B cell (primary cell): ENCODE measurements at regions of chr1 and their contacts with region 1.

Region 1: DNA sequence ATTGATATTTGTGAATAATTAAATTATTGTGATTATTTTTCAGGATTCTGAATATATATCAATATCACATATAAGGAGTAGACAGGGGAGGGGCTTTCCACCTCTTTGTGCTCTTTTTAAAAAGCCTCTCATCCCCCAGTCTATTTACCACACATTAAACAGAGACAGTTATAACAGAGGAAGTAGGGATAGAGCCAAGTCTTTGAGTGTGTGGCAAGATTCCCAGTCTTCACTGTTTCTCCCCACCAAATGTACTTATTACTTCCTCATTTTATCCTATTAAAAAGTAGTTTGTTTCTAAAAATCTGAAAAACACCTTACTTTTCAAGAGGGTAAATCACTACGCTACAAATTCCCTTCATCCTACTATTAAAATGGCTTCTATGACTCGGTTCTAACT is 46.7 kb downstream of the EPS15 start:
- DNase-seq: no peak
- ATAC-seq: no peak
- H3K4me3 ChIP-seq: no peak overlapping the region
- H3K4me3 Mint-ChIP-seq: no peak overlapping the region
- H3K27ac ChIP-seq: peak overlapping the region in 1 of 2 donors; percentile 58
- H3K27ac Mint-ChIP-seq: no peak overlapping the region
- H3K4me1 ChIP-seq: no peaks in the 10 kb centered on the region
- H3K4me1 Mint-ChIP-seq: peaks cover 16% of the 10 kb centered on the region
- H3K27me3 ChIP-seq: no peaks in the 10 kb centered on the region
- H3K27me3 Mint-ChIP-seq: no peaks in the 10 kb centered on the region
- CTCF ChIP-seq: no peak

Region 2: GRCh38 chr1:51433269-51433971 is 38.9 kb before region 1 on chr1:
- CTCF ChIA-PET with region 1: no interaction called
- POLR2A ChIA-PET with region 1: no interaction called
- intact Hi-C with region 1: loop called (anchors 5 kb)
- DNase-seq: no peak
- ATAC-seq: no peak
- H3K4me3 ChIP-seq: no peak overlapping the region
- H3K4me3 Mint-ChIP-seq: no peak overlapping the region
- H3K27ac ChIP-seq: peak overlapping the region in 1 of 2 donors; percentile 39
- H3K27ac Mint-ChIP-seq: peak overlapping the region; percentile 56
- H3K4me1 ChIP-seq: peaks cover 19 to 22% of the 10 kb centered on the region in 2 donors
- H3K4me1 Mint-ChIP-seq: peaks cover 19% of the 10 kb centered on the region
- H3K27me3 ChIP-seq: no peaks in the 10 kb centered on the region
- H3K27me3 Mint-ChIP-seq: no peaks in the 10 kb centered on the region
- CTCF ChIP-seq: no peak

Region 3: DNA sequence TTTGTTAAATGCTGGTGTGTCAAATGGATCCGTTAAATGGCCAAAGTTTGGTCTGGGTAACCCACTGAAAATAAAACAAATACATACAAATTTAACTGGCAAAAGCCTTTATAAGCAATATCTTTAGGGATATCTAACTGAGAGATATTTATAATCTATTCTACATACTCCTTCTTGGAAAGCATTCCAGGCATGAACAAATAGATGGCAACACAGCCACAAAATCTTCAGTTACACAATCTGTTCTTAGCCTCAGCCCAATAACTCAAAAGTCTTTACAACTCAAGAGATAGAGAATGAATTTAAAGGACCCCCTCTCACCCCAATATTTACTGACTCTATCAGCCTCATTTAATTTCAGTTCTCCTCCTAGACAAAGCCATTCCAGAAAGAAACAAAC is 347.5 kb after region 1 on chr1:
- CTCF ChIA-PET with region 1: no interaction called
- POLR2A ChIA-PET with region 1: no interaction called
- intact Hi-C with region 1: no loop called
- DNase-seq: no peak
- ATAC-seq: no peak
- H3K4me3 ChIP-seq: no peak overlapping the region
- H3K4me3 Mint-ChIP-seq: no peak overlapping the region
- H3K27ac ChIP-seq: no peak overlapping the region
- H3K27ac Mint-ChIP-seq: no peak overlapping the region
- H3K4me1 ChIP-seq: no peaks in the 10 kb centered on the region
- H3K4me1 Mint-ChIP-seq: no peaks in the 10 kb centered on the region
- H3K27me3 ChIP-seq: no peaks in the 10 kb centered on the region
- H3K27me3 Mint-ChIP-seq: no peaks in the 10 kb centered on the region
- CTCF ChIP-seq: no peak